Activated B cell treated with CpG ODN at 0.5 μM for 24 hours (primary cell): ENCODE measurements at regions of chr18 and their contacts with region 1.

Region 1: DNA sequence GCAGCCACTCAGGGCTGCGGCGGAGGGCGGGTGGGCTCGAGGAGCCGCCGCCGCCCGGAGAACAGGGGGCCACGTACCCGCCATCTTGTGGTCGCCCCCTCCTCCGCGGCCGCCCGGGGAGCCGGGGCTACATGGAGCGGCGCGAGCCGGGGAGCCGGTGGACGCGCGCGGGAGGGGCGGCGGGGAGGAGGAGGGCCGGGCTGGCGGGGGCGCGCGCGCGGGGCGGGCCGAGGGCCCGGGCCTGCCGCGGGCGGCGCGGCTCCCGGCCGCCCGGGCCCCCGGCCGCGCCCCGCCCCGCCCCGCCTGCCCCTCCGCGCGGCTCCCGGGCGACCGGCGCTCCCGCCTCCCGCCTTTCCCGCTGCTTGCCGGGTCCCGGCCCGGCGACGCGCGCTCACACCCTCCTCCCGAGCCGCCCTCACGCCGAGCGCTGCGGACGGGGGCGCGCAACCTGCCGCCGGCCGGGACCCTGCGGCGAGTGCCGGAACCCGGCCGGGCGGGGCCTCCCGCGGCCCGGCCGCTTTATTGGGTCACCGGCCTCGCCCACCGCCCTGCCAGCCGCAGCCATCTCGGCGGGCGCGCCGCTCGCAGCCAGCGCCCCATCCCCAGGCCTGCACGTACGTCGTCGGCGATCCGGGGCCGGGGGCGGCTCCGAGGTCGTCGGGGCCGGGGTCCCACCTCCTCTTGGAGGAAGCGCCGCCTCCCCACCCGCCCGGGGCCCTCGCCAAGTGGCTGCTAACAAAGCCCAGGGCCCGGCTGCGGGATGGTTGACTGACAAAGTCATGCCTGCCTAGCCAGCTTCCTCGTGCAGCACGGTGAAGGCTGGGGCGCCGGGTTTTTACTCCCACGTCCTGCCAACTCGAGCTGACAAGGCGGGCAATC is at the start of gene PPP4R1:
- DNase-seq: peak; percentile 74
- ATAC-seq: peak; percentile 68
- H3K4me3 Mint-ChIP-seq: peak within 1 kb of the TSS; percentile 86
- H3K27ac Mint-ChIP-seq: peak within 1 kb of the TSS; percentile 90
- H3K4me1 Mint-ChIP-seq: peaks cover 26% of the 10 kb centered on the region
- H3K27me3 Mint-ChIP-seq: no peaks in the 10 kb centered on the region
- CTCF ChIP-seq: no peak
- total RNA-seq, gene PPP4R1: 48.1 and 51.3 TPM in 2 replicates

Region 2: GRCh38 chr18:8704361-8705279 is 910.0 kb before region 1 on chr18:
- CTCF ChIA-PET with region 1: no interaction called
- POLR2A ChIA-PET with region 1: no interaction called
- intact Hi-C with region 1: loop called (anchors 10 kb)
- DNase-seq: peak; percentile 89
- ATAC-seq: peak; percentile 92
- H3K4me3 Mint-ChIP-seq: peak overlapping the region; percentile 89
- H3K27ac Mint-ChIP-seq: peak overlapping the region; percentile 41
- H3K4me1 Mint-ChIP-seq: peaks cover 26% of the 10 kb centered on the region
- H3K27me3 Mint-ChIP-seq: peaks cover 14% of the 10 kb centered on the region
- CTCF ChIP-seq: no peak

Region 3: DNA sequence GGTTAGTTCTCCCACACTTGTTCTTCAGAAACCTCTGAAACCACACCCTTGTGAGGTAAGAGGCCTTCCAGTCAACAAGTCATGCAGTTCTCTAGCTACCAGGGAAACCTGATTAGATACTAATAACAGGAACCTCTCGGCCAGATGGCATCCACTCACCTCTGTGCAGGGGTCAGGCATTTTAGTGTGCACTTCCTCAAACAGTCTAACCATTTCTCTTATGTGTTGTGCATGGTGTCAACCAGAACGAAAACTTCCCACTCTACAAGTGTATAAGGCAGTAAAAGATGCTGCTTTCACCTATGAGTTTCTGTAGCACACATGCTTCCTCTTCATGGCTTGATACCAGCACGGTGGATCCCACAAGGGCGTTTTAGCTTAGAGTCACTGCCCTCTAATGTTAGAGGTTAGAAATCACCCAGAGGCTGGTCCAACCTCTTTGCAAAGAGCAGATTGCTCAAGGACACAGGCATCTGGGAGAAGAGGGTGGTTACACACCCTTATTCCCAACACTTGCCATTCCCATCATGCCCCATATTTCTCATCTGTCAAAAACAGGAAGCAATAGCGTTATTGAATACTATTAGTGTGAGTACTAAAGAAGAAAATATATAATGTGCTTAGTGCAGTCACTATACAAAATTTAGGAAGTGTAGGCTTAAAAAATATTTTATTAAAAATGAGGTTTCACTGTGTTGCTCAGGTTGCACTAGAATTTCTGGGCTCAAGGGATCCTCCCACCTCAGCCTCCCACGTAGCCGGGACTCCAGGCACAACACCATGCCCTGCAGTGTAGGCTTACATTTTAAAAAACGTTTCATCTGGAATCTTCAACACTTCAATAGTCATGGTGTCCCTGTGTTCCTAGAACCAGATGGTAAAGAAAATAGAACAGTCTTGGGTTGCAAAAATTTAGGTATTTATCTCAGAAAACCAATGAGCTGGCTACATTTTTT is 58.9 kb after region 1 on chr18:
- CTCF ChIA-PET with region 1: interaction called, 9 read pairs
- POLR2A ChIA-PET with region 1: interaction called, 19 read pairs
- intact Hi-C with region 1: loop called (anchors 1 kb)
- DNase-seq: peak; percentile 25
- ATAC-seq: peak; percentile 95
- H3K4me3 Mint-ChIP-seq: peak overlapping the region; percentile 35
- H3K27ac Mint-ChIP-seq: peak overlapping the region; percentile 93
- H3K4me1 Mint-ChIP-seq: peaks cover 15% of the 10 kb centered on the region
- H3K27me3 Mint-ChIP-seq: no peaks in the 10 kb centered on the region
- CTCF ChIP-seq: no peak

Region 4: DNA sequence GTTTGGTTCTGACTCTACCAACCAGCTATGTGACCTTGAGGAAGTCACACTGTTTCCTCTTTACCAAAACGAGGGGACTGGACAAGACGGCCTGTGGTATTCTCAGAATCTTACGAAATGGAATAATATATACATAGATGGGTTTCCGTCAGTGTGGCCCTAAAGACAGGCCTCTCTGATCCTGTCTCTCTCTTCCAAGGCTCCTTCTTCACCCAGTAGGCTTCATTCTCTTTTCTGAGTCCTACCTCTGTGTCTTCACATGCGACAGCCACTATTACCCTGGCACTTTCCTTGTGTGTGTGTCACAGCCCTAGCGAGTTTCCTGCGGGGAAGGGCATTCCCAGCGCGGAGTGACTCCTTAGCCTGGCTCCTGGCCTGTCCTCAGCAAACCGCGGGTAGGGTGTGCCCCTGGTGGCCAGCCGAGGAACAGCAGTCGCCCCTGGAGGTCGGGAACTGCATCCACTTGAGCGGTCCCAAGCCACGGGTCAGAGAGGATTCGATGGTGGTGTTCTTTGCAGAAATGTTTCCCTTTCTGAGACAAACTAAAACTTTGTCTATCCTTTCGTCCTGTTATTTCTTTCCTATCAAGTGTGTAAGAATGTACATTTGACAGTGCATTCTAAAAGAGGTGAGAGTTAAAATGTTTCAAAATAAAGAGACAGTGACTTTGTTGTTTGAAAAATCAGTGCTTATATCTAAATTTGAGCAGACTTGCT is 156.8 kb after region 1 on chr18:
- CTCF ChIA-PET with region 1: interaction called, 4 read pairs
- POLR2A ChIA-PET with region 1: no interaction called
- intact Hi-C with region 1: loop called (anchors 1 kb)
- DNase-seq: peak; percentile 66
- ATAC-seq: peak; percentile 95
- H3K4me3 Mint-ChIP-seq: peak overlapping the region; percentile 13
- H3K27ac Mint-ChIP-seq: no peak overlapping the region
- H3K4me1 Mint-ChIP-seq: peaks cover 28% of the 10 kb centered on the region
- H3K27me3 Mint-ChIP-seq: no peaks in the 10 kb centered on the region
- CTCF ChIP-seq: peak; percentile 95

Region 5: DNA sequence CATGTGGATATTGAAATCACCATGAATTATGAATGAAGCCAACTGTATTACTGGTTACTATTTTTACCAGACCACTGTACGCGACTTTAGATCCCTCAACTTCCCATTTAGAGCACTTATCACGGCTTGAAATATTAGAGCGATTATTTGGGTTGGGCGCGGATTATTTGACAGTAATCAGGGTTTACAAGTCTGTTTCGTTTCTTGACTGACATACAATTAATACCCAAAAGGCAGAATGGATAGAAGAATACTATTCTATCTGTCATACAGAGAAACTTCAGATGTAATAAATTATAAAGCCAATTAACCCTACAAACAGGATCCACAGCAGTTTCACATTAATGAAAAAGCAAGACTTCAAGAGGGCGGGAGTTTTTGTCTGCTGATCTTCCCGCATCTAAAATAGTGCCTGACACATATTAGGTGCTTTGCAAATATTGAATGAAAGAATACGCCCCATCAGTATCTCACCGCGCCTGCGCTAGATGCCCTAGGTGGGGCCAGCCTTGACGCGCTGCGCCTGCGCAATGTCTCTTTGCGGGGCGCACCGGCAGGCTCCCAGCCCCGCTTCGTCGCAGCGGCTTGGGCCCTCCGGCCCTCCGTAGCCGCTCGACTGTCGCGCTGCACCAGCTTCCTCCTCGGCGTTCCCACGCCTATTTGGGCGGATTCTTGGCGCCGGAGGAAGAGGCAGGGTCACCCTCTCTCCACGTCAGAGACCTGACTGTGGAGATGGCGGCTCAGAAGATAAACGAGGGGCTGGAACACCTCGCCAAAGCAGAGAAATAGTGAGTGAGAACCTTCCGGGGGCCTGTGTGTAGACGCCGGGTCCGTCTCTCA is 911.0 kb after region 1 on chr18 and contains the start of gene NAPG:
- CTCF ChIA-PET with region 1: no interaction called
- POLR2A ChIA-PET with region 1: no interaction called
- intact Hi-C with region 1: loop called (anchors 2 kb)
- DNase-seq: peak; percentile 86
- ATAC-seq: peak; percentile 91
- H3K4me3 Mint-ChIP-seq: peak within 1 kb of the TSS; percentile 99
- H3K27ac Mint-ChIP-seq: peak within 1 kb of the TSS; percentile 96
- H3K4me1 Mint-ChIP-seq: peaks cover 49% of the 10 kb centered on the region
- H3K27me3 Mint-ChIP-seq: no peaks in the 10 kb centered on the region
- CTCF ChIP-seq: no peak
- total RNA-seq, gene NAPG: 24.5 and 33.3 TPM in 2 replicates